Left cardiac atrium (tissue), 4 donors: ENCODE measurements at regions of chrX and their contacts with region 1.

Region 1: DNA sequence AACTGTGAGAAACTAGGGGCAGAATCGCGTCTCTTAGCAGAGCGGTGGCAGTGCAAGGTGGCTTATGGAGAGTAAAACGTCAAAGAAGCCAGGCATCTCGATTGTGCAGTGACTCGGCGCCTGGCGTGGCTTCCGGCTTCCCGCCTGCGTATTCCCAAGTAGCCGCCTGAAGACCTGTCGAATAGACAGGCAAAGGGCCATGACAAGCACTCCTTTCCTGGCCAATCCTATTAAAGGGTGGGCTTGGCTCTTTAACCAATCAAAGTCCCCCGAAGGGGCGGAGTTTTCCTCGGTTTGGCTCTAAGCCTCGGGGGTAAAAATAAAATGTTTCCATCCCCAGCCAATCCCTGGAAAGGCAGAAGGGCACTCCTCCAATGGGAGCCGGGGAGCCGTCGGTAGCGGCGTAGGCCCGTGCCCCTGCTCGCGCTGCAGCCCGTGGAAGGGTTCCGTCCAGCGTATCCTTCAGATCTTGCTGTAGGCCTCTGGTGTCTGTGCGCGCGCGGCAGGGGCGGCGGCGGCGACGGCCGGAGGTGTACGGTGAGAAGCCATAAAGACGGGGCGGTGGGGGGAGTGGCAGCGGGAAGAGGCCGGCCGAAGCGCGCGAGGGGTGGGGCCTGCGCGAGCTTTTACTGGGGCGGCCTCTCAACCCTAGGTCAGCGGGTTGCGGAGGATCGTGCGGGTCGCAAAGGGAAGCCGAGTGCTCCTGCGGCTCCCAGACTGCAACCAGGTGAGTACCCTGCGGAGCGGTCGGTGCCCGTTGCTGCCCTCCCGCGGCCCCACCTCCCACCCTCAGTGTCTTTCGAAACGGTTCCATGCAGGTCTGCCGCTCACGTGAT is at the start of gene KANTR:
- DNase-seq: peak; percentile 86
- ATAC-seq: peak; percentile 93 to 95
- total RNA-seq, gene KANTR: 5.4 to 5.7 TPM

Region 2: DNA sequence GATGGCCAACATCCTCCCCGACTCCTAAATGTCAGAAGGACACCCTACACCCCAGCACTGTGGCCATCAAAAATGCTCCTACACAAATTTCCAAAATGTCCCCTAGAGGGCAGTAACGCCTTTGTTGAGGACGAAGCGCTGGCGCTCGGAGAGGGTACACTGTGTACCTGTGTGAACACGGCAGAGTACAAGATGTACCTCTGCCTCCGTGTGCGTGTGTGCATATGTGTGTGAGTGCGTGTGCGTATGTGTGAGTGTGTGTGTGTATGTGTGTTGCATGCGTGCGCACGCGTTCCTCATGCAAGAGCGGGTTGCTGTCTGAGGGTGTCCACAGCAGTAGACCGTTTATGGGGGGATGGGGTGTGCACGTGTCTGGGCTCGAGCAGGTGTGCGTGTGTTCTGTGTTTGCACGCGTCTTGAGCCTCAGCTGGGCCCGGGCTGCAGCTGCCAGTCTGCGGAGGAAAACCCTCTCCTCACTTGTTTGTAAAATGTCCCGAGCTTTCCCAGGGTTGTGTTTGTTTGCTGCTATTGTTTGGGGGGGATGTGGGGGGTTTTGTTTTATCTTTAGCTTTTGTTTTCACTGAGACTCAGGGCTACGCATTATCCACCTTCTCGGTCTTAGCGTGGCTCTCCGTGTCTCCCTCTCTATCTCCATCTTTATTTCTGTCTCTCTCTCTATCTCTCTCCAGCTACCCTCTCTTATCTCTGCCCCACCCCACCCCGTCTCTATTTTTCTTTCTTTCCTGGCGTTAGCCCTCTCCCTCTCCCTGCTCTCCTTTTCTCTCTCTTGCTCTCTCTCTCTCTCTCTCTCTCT is 22.2 kb before region 1 on chrX:
- intact Hi-C with region 1: loop called in 1 of 2 experiments (anchors 1 kb)
- DNase-seq: peak; percentile 73
- ATAC-seq: peak; percentile 84 to 90